Heart right ventricle (tissue), 16 donors: ENCODE measurements at regions of chr14 and their contacts with region 1.

Region 1: DNA sequence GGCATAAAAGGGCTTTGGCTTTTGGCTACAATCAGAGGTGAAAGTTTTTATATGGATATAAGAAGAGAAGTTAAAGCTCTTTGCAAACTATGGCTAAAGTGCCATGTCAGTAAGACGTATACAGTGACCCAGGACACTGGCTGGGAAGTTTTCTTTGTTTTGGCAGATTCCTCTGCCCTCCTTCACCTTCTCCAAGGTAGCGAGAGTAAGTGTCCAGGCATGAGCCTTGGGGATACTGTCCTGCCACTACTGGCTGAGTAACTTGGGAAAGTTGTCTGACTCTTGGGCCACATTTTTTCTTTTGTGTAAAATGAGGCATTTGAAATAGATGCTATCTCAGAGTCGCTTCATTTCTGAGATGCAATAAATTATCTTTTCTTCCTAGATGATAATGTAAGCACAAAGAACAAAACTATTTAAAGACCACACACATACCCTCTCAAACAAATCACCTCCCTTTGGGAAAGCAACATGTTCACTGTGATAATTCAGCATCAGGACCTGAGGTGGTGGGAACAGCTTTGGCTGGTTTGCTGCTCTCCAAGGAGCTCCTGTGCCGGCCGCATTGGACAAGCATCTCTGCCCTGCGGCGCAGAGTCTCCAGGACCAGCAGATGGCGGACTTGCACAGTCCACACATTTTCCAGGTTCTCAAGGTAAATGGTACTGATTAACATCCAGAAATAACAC is 106.3 kb downstream of the PTCSC3 start:
- DNase-seq: peak in 1 of 2 donors; percentile 26
- ATAC-seq: peak in 4 of 8 donors; percentile 38 to 69 (median 61)
- H3K4me3 ChIP-seq: no peak overlapping the region
- H3K27ac ChIP-seq: no peak overlapping the region
- H3K4me1 ChIP-seq: no peaks in the 10 kb centered on the region
- H3K27me3 ChIP-seq: peaks cover 0 to 45% (median 14%) of the 10 kb centered on the region in 7 donors
- CTCF ChIP-seq: peak; percentile 12 to 69 (median 51)

Region 2: DNA sequence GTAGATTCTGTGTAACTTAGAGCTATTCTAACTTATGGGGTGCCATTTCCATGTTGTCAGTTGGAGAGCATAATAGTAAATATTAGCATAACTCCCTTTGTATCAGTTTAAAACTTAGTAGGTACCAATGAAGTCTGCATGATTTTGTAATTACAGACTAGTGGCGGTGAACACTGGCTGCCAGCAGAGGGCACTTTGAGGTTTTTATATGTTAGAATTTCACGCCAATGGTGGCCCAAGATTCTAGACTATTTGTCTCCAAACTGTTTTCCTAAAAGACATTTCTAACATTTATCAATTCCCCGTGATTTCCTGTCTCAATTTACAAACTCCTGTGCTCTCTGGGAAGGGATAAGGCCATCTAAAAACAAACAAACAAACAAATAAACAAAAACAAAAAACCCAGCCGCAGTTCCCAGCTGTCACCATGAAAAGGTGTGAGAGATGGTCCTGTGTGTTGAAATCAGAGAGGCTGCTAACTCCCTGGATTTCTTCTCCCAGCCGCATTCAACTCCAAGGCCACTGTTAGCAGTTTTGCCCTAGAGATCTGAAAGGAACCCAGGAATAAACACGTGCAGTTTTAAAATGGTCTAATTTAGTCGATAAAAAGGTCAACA is 186.4 kb before region 1 on chr14:
- intact Hi-C with region 1: loop called in 2 of 10 experiments (anchors 10 kb)
- DNase-seq: no peak
- ATAC-seq: no peak
- H3K4me3 ChIP-seq: no peak overlapping the region
- H3K27ac ChIP-seq: no peak overlapping the region
- H3K4me1 ChIP-seq: peaks cover 0 to 9% (median 5%) of the 10 kb centered on the region in 9 donors
- H3K27me3 ChIP-seq: no peaks in the 10 kb centered on the region
- CTCF ChIP-seq: peak in 8 of 9 donors; percentile 10 to 66 (median 57)

Region 3: GRCh38 chr14:36105401-36105800 is 35.2 kb after region 1 on chr14:
- intact Hi-C with region 1: no loop called
- DNase-seq: no peak
- ATAC-seq: no peak
- H3K4me3 ChIP-seq: no peak overlapping the region
- H3K27ac ChIP-seq: no peak overlapping the region
- H3K4me1 ChIP-seq: no peaks in the 10 kb centered on the region
- H3K27me3 ChIP-seq: peaks cover 0 to 4% (median 2%) of the 10 kb centered on the region in 7 donors
- CTCF ChIP-seq: no peak

Region 4: DNA sequence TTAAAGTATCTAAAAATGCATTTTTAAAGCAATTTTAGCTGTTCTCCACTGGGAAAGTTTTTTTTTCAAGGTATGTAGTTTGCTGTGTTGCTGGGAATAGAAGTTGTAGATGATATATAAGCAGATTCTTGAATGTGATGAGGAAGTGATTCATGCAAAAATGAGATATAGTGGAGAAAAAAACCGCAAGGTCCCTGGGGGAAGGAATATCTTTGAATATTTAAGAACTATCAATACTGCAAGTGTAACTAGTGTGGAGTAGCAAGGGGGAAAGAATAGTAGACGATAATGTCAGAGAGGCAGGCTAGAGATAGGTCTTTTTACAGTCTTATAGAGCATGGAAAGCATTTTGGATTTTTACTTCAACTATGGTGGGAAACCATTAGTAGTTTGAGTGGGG is 63.9 kb after region 1 on chr14:
- intact Hi-C with region 1: no loop called
- DNase-seq: no peak
- ATAC-seq: no peak
- H3K4me3 ChIP-seq: no peak overlapping the region
- H3K27ac ChIP-seq: no peak overlapping the region
- H3K4me1 ChIP-seq: no peaks in the 10 kb centered on the region
- H3K27me3 ChIP-seq: no peaks in the 10 kb centered on the region
- CTCF ChIP-seq: no peak

Region 5: GRCh38 chr14:36373982-36374673 is 304.0 kb after region 1 on chr14:
- intact Hi-C with region 1: loop called in 2 of 10 experiments (anchors 5 to 10 kb)
- DNase-seq: peak; percentile 18 to 58
- ATAC-seq: peak in 6 of 8 donors; percentile 55 to 81 (median 61)
- H3K4me3 ChIP-seq: no peak overlapping the region
- H3K27ac ChIP-seq: no peak overlapping the region
- H3K4me1 ChIP-seq: no peaks in the 10 kb centered on the region
- H3K27me3 ChIP-seq: peaks cover 0 to 7% (median 0%) of the 10 kb centered on the region in 7 donors
- CTCF ChIP-seq: peak; percentile 40 to 85 (median 73)

Region 6: DNA sequence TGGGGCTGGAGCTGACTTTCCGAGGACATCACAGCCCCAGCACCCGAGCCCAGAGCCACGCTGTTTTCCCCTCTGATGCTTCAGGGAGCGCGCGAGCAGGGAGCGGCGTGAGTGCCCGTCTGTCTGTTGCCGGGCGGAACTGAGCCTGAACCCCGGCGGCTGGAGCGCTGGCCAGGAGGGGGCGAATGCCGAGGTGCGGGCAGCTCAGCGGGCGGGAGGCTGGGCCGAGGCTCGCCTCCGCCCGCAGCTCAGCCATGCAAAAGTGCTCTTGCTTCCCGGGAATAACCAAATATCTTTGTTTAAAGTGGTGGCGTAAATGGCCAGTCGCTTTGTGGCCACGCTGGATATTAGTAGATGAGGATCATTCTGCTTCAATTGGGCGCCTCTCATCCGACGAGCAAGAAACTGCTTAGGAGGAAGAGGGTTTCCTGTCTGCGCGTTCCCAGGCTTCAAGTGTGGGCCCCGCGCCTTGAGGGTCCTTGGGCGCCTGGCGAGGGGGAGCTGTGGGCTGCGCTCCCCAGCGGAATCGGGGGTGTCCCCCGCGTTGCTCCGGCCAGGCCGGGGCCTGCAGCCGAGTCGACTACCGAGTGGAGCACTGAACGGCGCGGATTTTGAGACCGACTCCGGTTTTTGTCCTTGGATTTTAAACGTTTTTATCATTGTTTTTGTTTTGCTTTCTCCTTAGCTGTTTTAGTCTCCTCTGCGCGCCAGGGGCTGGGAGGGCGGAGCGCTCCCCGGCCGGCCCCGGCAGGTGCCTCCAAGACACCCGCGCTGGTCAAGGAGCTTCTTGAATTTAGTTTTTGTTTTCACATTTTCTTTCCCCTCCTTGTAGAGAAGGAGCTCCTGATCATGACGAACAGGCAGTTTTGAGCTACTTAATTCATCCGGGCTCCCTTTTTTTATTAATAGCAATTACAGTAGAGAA is 450.7 kb after region 1 on chr14:
- intact Hi-C with region 1: loop called in 1 of 10 experiments (anchors 10 kb)
- DNase-seq: no peak
- ATAC-seq: peak in 1 of 8 donors; percentile 28
- H3K4me3 ChIP-seq: peak overlapping the region in 9 of 10 donors; percentile 6 to 40 (median 28)
- H3K27ac ChIP-seq: no peak overlapping the region
- H3K4me1 ChIP-seq: peaks cover 6 to 46% (median 39%) of the 10 kb centered on the region in 9 donors
- H3K27me3 ChIP-seq: peaks cover 69 to 100% (median 100%) of the 10 kb centered on the region in 7 donors
- CTCF ChIP-seq: peak in 3 of 9 donors; percentile 14 to 26 (median 25)